PC-9 (cell line): ENCODE measurements at regions of chr2 and their contacts with region 1.

Region 1: DNA sequence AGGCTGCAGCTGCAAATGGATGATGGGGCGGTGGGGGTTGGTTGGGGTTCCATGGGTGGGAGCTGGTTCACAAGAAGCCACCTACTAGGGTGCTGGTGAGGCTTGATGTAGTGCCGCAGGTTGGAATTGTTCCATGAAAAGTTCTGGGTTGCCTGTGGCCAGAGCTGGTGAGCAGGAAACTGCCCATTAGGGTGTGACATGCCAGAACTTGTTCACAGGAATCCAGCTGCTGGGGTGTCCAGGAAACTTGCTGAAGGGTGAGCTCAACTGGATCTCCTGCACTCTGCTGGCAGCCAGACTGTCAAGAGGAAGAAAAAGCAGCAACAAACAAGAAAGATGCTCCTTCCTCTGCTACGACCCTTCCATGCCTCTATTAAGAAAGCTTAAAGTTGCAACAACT is 48.8 kb downstream of the MAP3K20 start:
- DNase-seq: peak; percentile 11 to 64
- H3K4me3 ChIP-seq: no peak overlapping the region
- H3K27ac ChIP-seq: no peak overlapping the region
- H3K4me1 ChIP-seq: no peaks in the 10 kb centered on the region
- H3K27me3 ChIP-seq: no peaks in the 10 kb centered on the region
- CTCF ChIP-seq: no peak

Region 2: DNA sequence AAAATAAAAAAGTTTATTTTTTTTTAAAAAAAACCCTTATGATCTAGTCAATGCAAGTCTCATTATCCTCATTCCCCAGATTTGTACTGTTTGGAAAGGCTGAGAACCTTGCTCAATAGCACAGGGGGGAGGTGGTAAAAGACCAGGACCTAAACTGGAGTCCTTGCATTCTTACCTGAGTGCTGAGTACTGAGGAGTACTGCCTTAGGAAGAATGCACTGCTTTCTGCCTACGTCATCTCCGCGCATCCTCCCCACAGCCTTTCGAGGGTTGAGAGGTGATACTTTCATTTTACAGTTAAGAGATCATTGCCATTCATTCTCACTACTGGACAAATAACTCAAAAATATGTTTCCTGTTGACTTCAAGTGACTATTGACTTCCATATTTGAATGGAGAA is 25.1 kb after region 1 on chr2:
- CTCF ChIA-PET with region 1: interaction called, 15 read pairs
- POLR2A ChIA-PET with region 1: no interaction called
- intact Hi-C with region 1: loop called (anchors 1 kb)
- DNase-seq: no peak
- H3K4me3 ChIP-seq: no peak overlapping the region
- H3K27ac ChIP-seq: no peak overlapping the region
- H3K4me1 ChIP-seq: peaks cover 26% of the 10 kb centered on the region
- H3K27me3 ChIP-seq: no peaks in the 10 kb centered on the region
- CTCF ChIP-seq: no peak